MCF 10A (cell line): ENCODE measurements at regions of chr19 and their contacts with region 1.

Region 1: GRCh38 chr19:58362272-58362994 is at the start of gene ZNF497:
- DNase-seq: peak; percentile 97
- H3K4me3 Mint-ChIP-seq: peak within 1 kb of the TSS; percentile 99
- H3K27ac Mint-ChIP-seq: peak within 1 kb of the TSS; percentile 99
- H3K4me1 Mint-ChIP-seq: peaks cover 5% of the 10 kb centered on the region
- H3K27me3 Mint-ChIP-seq: no peaks in the 10 kb centered on the region
- CTCF ChIP-seq: no peak
- total RNA-seq, gene ZNF497: 3.2 and 3.9 TPM in 2 replicates

Region 2: DNA sequence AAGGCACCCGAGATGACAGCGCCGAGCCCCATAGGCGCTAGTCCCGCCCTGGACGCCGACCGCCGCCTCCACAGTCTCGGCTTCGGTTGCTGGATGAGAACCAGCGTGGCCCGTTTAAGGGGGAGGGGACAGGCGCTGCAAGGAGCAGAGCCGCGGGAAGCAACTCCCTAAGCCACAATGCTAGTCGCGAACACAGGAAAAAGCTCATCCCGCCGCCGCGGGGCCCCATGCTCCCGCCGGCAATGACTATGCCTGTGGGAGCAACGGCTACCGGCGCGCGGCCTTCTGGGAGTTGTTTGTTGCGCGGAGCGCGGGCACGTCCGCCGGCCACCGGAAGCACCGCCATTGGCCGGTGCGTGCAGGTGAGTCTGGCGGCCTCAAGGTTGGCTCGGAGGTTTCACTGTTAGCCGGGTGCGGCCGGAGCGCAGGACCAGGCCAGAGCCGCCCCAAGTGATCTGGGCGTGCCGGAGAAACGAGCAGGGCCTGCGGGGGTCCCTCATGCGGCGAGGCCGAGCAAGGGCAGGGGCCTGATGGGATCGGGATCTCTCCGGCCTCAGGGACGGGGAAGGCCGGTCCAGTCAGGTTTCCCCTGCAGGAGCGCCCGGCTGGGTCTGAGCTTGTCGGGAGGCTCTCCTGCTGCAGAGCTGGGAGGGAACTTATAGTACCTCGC is 133.7 kb before region 1 on chr19 and contains the start of gene ZNF544:
- CTCF ChIA-PET with region 1: no interaction called
- POLR2A ChIA-PET with region 1: interaction called, 10 read pairs
- intact Hi-C with region 1: no loop called
- DNase-seq: peak; percentile 84
- H3K4me3 Mint-ChIP-seq: peak within 1 kb of the TSS; percentile 85
- H3K27ac Mint-ChIP-seq: peak within 1 kb of the TSS; percentile 92
- H3K4me1 Mint-ChIP-seq: peaks cover 8% of the 10 kb centered on the region
- H3K27me3 Mint-ChIP-seq: no peaks in the 10 kb centered on the region
- CTCF ChIP-seq: no peak
- total RNA-seq, gene ZNF544: 39.4 and 42.3 TPM in 2 replicates

Region 3: DNA sequence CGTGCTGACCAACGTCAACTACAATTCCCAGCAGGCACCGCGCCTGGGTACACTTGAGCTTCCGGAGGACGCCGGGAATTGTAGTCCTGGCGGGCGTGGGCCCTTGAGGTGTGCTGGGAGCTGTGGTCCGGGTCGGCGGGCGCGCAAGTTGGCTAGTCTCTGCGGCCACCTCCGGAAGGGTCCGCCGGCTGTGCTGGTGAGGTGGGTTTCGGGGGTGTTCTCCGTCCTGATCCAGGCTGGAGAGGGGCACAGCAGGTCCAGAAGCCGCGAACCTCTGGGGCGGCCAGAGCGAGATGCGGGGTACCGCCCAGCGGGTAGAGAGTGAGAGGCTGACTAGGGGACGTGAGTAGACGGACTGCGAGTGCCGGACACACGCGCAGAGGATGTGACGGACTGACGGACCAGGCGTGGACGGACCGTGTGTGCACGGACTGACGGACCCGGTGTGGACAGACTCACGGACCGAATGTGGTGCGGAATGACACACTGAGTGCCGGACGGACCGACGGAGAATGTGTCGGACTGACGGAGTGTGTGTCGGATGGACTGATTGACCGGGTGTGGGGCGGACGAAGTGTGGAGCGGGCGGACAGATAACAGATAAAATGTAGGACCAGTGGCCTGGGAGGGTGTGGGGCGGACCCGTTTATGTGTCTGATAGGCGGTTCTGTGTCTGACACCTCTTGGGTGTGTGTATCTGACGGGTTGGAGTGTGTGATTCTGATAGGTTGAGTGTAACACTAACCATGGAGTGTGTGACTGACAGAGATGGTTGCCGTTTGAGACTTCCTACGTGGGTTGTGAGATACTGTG is 35.3 kb before region 1 on chr19 and contains the start of gene ZSCAN22:
- CTCF ChIA-PET with region 1: no interaction called
- POLR2A ChIA-PET with region 1: interaction called, 55 read pairs
- intact Hi-C with region 1: loop called (anchors 1 kb)
- DNase-seq: peak; percentile 98
- H3K4me3 Mint-ChIP-seq: no peak within 1 kb of the TSS
- H3K27ac Mint-ChIP-seq: no peak within 1 kb of the TSS
- H3K4me1 Mint-ChIP-seq: peaks cover 9% of the 10 kb centered on the region
- H3K27me3 Mint-ChIP-seq: no peaks in the 10 kb centered on the region
- CTCF ChIP-seq: no peak
- total RNA-seq, gene ZSCAN22: 3.8 and 4.7 TPM in 2 replicates

Region 4: GRCh38 chr19:58346961-58347931 is 15.2 kb before region 1 on chr19:
- CTCF ChIA-PET with region 1: interaction called, 3 read pairs
- POLR2A ChIA-PET with region 1: interaction called, 32 read pairs
- intact Hi-C with region 1: no loop called
- DNase-seq: peak; percentile 50
- H3K4me3 Mint-ChIP-seq: peak overlapping the region; percentile 84
- H3K27ac Mint-ChIP-seq: peak overlapping the region; percentile 64
- H3K4me1 Mint-ChIP-seq: peaks cover 5% of the 10 kb centered on the region
- H3K27me3 Mint-ChIP-seq: no peaks in the 10 kb centered on the region
- CTCF ChIP-seq: no peak

Region 5: GRCh38 chr19:58380722-58381466 is 18.5 kb after region 1 on chr19 and contains the start of gene ZNF837:
- CTCF ChIA-PET with region 1: interaction called, 4 read pairs
- POLR2A ChIA-PET with region 1: interaction called, 27 read pairs
- intact Hi-C with region 1: loop called (anchors 1 kb)
- DNase-seq: peak; percentile 100
- H3K4me3 Mint-ChIP-seq: peak within 1 kb of the TSS; percentile 94
- H3K27ac Mint-ChIP-seq: peak within 1 kb of the TSS; percentile 97
- H3K4me1 Mint-ChIP-seq: peaks cover 17% of the 10 kb centered on the region
- H3K27me3 Mint-ChIP-seq: no peaks in the 10 kb centered on the region
- CTCF ChIP-seq: no peak
- total RNA-seq, gene ZNF837: 1.5 and 1.7 TPM in 2 replicates

Region 6: DNA sequence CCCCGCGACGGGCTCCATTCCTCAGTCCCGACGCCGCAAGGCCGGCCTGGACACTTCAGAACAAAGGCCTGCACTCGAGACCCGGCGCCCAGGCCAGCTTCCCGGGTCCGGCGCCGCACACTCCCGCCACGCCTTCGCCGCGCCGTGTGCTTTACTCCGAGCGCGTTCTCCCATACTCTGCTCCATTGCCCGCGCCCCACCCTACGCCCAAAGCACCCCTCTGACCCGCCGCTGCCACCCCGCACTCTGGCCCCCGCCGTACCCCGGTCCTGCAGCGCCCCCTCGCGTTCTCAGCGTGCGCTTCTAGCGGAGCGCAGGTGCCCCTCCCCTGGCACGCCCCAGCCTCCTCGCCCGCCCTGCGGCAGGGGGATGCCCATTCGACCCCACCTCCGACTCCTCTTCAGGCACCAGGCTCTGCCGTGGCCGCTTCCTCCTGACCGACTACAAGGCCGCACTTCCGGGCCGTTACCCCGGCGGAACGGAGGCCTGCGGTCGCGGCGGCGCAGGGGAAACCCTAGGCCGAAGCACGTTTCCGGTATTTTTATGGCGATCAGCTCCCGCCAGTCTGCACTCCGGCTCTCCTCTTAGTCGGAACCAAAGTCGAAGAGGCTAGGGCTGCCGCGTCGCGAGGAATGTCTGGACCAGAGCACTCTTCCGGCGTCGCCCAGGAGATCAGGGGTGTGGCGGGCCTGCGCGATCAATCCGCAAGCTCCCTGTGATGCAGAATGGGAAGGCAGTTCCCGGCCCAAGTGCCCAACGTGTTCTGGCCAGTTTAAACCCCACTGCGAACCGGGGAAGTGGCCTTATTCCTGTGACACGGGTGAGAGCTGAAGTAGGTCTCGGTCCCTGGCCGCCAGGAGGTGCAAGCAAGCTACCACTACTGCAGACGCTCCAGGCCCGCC is 157.2 kb after region 1 on chr19 and contains the start of gene ZBTB45:
- CTCF ChIA-PET with region 1: no interaction called
- POLR2A ChIA-PET with region 1: interaction called, 20 read pairs
- intact Hi-C with region 1: loop called (anchors 1 kb)
- DNase-seq: peak; percentile 98
- H3K4me3 Mint-ChIP-seq: peak within 1 kb of the TSS; percentile 83
- H3K27ac Mint-ChIP-seq: peak within 1 kb of the TSS; percentile 100
- H3K4me1 Mint-ChIP-seq: peaks cover 27% of the 10 kb centered on the region
- H3K27me3 Mint-ChIP-seq: no peaks in the 10 kb centered on the region
- CTCF ChIP-seq: peak; percentile 86
- total RNA-seq, gene ZBTB45: 12.8 and 15.0 TPM in 2 replicates